ENCODE measurements at regions of chr11 and their contacts with region 1.

Region 1: DNA sequence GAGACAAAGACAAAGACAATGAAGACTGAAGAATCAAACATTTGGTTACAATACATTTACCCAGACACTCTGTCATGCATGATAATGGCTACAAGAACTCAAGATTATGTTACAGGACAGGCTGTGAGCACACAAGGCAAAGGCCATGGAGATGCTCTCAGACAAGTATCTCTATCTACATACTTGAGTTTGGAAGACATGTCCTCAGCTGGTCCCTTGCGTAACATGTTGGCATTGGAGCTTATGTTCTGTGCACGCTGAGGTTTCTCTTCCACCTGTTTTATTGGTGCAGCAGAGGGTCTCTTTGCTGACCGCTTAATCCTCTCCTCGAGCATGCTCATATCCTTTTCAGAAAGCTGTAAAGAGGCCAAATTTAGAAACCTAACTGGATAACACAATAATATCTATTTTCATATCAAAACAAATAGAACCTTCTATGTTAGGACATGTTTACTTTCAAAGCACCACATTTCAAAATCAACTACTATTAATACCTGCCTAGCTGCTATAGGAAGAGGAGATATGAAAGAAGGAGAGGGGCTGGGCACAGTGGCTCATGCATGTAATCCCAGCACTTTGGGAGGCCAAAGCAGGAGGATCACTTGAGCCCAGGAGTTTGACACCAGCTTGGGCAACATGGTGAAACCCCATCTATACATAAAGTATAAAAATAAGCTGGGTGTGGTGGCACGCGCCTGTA is 41.6 kb downstream of the F2 start:
- DNase-seq: no peak
- H3K4me3 Mint-ChIP-seq: no peak overlapping the region
- H3K27ac Mint-ChIP-seq: no peak overlapping the region
- H3K4me1 Mint-ChIP-seq: no peaks in the 10 kb centered on the region
- H3K27me3 Mint-ChIP-seq: no peaks in the 10 kb centered on the region

Region 2: GRCh38 chr11:46724088-46724487 is 36.5 kb before region 1 on chr11:
- intact Hi-C with region 1: no loop called
- DNase-seq: no peak
- H3K4me3 Mint-ChIP-seq: no peak overlapping the region
- H3K27ac Mint-ChIP-seq: no peak overlapping the region
- H3K4me1 Mint-ChIP-seq: no peaks in the 10 kb centered on the region
- H3K27me3 Mint-ChIP-seq: no peaks in the 10 kb centered on the region

Region 3: DNA sequence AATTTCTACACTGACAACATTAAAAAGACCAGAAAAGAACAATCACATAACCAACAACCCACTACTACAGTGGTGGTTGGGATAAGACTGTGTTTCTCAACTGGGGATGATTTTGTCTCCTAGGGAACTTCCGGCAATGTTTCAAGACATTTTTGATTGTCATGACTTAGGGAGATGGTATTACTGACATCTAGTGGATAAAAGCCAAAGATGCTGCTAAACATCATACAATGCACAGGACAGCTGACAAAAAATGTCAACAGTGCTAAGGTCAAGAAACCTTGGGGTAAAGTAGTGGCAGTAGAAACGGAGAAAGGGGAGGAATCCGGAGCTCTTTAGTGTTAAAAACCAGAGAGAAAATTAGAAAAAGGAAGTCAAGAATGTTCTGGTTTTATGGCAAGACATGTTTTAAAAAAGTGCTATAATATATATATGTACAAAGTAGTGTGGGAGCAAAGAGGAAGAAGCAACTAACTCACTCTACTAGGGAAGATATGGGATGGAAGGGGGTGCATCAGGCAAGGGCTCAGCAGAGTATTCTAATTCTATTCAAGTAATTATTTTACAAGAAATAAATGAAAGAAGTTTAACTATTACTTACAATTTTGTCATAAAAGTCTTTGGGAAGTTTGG is 48.3 kb after region 1 on chr11:
- intact Hi-C with region 1: loop called (anchors 5 kb)
- DNase-seq: no peak
- H3K4me3 Mint-ChIP-seq: no peak overlapping the region
- H3K27ac Mint-ChIP-seq: peak overlapping the region; percentile 34
- H3K4me1 Mint-ChIP-seq: peaks cover 25% of the 10 kb centered on the region
- H3K27me3 Mint-ChIP-seq: no peaks in the 10 kb centered on the region